Mammary epithelial cell (primary cell): ENCODE measurements at regions of chr12 and their contacts with region 1.

Region 1: DNA sequence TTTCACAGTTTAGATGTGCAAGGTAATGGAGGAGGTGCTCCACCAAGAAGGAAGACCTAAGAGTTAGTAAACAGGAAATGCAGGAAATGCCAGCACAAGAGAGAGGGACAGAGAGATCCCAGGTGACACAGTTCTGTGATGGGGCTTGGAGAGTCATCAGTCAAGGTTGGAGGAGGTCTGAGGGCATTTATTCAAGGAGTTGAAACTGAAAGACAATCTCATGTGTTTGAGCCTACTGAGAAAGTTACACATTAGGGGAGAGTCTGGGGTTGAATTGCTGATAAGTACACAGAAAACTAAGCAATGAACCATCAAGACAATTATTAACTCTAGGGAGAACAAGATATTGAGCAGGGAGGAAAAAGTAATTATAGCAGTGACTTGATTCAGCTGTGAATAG is 138.5 kb downstream of the ANO6 start:
- DNase-seq: no peak
- H3K4me3 ChIP-seq: no peak overlapping the region
- H3K27ac ChIP-seq: no peak overlapping the region
- H3K4me1 ChIP-seq: no peaks in the 10 kb centered on the region
- H3K27me3 ChIP-seq: no peaks in the 10 kb centered on the region
- CTCF ChIP-seq: no peak

Region 2: DNA sequence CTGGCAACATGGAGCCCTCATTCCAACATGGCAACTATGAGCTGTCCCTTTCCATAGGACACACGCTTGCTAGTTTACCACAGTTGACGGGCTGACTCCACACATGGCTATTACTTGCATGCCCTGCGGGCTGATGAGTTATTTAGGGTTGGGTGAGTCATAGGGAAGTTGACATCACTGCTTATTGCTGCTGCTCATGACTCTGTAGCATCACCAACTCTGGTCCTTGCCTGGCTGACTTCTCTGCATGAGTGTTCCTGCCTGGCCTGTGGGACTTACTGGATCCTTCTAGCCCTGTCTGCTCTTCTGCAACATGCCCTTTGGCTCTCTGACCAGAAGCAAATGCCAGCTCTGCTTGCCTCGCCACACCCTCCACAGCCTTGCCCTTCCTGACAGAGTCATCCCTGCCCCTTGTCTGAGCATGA is 61.0 kb after region 1 on chr12:
- CTCF ChIA-PET with region 1: no interaction called
- dilution Hi-C with region 1: no loop called
- in situ Hi-C with region 1: no loop called
- intact Hi-C with region 1: no loop called
- DNase-seq: peak; percentile 99
- H3K4me3 ChIP-seq: no peak overlapping the region
- H3K27ac ChIP-seq: peak overlapping the region; percentile 31
- H3K4me1 ChIP-seq: peaks cover 7% of the 10 kb centered on the region
- H3K27me3 ChIP-seq: no peaks in the 10 kb centered on the region
- CTCF ChIP-seq: no peak

Region 3: GRCh38 chr12:45464699-45465098 is 110.3 kb after region 1 on chr12:
- CTCF ChIA-PET with region 1: no interaction called
- dilution Hi-C with region 1: no loop called
- in situ Hi-C with region 1: loop called in 1 of 2 experiments (anchors 25 kb)
- intact Hi-C with region 1: no loop called
- DNase-seq: no peak
- H3K4me3 ChIP-seq: no peak overlapping the region
- H3K27ac ChIP-seq: no peak overlapping the region
- H3K4me1 ChIP-seq: no peaks in the 10 kb centered on the region
- H3K27me3 ChIP-seq: peaks cover 2% of the 10 kb centered on the region
- CTCF ChIP-seq: no peak